ENCODE measurements at regions of chr7 and their contacts with region 1.

Region 1: DNA sequence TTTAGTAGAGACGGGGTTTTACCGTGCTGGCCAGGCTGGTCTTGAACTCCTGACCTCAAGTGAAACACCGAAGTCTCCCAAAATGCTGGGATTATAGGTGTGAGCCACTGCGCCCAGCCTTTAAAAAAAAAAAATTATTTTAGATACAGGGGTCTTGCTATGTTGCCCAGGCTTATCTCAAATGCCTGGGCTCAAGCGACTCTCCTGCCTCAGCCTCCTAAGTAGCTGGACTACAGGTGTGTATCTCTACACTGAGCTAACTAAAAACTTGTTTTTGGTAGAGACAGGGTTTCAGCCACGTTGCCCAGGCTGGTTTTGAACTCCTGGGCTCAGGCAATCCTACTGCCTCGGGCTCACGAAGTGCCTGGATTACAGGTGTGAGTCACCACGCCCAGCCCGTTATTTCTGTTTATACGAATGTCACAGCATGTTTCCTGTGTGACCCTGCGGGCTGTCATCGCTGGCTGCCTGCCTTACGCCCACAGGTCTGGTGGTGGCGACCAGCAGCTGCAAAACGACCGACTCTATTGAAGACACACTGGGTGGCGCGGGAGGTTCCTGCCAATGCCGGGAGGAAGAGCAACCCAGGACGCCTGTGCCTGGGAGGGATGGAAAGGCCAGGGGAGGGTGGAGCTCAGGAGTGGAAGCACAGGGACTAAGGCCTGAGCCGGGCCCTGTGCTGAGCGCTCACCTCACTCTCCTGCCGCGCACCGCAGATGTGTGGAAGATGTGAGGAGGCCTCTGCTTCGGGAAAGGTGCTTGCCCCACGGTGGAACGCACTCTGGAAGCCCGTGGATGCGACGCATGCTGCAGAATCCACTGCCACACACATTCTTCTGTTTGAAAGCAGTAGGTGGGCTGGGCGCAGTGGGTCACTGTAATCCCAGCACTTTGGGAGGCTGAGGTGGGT is 32.8 kb downstream of the AMZ1 start:
- DNase-seq: peak; percentile 82 to 91 (median 83)
- H3K4me3 ChIP-seq: no peak overlapping the region
- H3K4me3 Mint-ChIP-seq: peak overlapping the region in 1 of 2 donors; percentile 36
- H3K27ac ChIP-seq: no peak overlapping the region
- H3K27ac Mint-ChIP-seq: peak overlapping the region in 4 of 7 donors; percentile 47 to 79 (median 73)
- H3K4me1 ChIP-seq: peaks cover 30 to 39% of the 10 kb centered on the region in 2 donors
- H3K4me1 Mint-ChIP-seq: peaks cover 35% of the 10 kb centered on the region
- H3K27me3 ChIP-seq: peaks cover 0 to 22% of the 10 kb centered on the region in 2 donors
- H3K27me3 Mint-ChIP-seq: peaks cover 35 to 41% (median 36%) of the 10 kb centered on the region in 3 donors
- CTCF ChIP-seq: peak; percentile 52

Region 2: GRCh38 chr7:2660585-2661408 is 60.0 kb before region 1 on chr7:
- intact Hi-C with region 1: no loop called
- DNase-seq: no peak
- H3K4me3 ChIP-seq: no peak overlapping the region
- H3K4me3 Mint-ChIP-seq: no peak overlapping the region
- H3K27ac ChIP-seq: no peak overlapping the region
- H3K27ac Mint-ChIP-seq: no peak overlapping the region
- H3K4me1 ChIP-seq: peaks cover 0 to 5% of the 10 kb centered on the region in 2 donors
- H3K4me1 Mint-ChIP-seq: peaks cover 7% of the 10 kb centered on the region
- H3K27me3 ChIP-seq: no peaks in the 10 kb centered on the region
- H3K27me3 Mint-ChIP-seq: peaks cover 0 to 2% (median 2%) of the 10 kb centered on the region in 3 donors
- CTCF ChIP-seq: peak; percentile 54

Region 3: DNA sequence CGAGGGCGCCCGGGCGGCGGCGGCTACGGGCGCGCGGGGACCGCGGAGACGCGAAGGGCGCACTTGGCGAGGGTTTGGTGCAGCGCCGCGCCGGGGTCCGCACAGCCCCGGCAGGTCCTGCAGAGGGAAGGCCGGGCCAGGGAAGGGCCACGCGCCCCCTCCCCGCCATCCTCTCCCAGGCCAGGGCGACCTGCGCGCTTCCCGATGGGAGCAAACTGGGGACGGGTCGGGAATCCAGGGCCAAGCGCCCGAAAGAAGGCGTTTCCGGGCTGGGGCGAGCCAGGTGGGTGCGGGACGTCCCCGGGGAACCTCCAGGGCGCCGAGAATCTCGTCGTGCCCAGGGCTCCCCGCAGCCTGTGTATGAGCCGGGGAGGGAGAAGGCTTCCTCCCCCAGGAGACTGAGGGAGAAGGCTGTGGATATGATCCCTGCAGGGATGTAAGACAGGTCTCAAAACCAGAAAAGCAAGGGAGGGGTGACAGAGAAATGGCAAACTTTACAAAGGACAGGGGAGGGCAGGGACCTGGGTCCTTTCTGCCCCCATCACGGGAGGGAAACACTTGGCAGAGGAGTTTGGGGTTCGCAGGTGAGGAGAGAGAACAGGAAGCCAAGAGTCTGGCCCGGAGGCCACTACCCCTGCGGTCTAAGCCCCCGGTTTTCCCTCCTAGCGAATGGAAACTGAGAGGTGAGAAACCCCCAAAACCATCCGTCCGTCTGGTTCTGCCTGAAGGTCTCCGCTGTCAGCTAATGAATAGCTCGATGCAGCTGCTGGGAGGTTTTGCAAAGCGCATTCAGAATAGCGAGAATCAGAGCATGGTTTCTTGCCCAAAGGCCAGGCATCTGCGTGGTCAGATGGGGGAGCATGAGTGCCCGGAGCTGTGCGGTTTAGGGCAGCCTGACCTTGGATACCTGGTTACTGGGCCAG is 32.2 kb before region 1 on chr7:
- intact Hi-C with region 1: no loop called
- DNase-seq: no peak
- H3K4me3 ChIP-seq: peak overlapping the region in 1 of 3 experiments; percentile 21
- H3K4me3 Mint-ChIP-seq: peak overlapping the region; percentile 53 to 85
- H3K27ac ChIP-seq: no peak overlapping the region
- H3K27ac Mint-ChIP-seq: peak overlapping the region in 4 of 7 donors; percentile 57 to 82 (median 73)
- H3K4me1 ChIP-seq: peaks cover 57 to 60% of the 10 kb centered on the region in 2 donors
- H3K4me1 Mint-ChIP-seq: peaks cover 36% of the 10 kb centered on the region
- H3K27me3 ChIP-seq: peaks cover 15 to 46% of the 10 kb centered on the region in 2 donors
- H3K27me3 Mint-ChIP-seq: peaks cover 45 to 66% (median 65%) of the 10 kb centered on the region in 3 donors
- CTCF ChIP-seq: no peak

Region 4: GRCh38 chr7:2821161-2821841 is 100.5 kb after region 1 on chr7:
- intact Hi-C with region 1: loop called in 1 of 2 experiments (anchors 5 kb)
- DNase-seq: peak; percentile 36 to 72 (median 49)
- H3K4me3 ChIP-seq: no peak overlapping the region
- H3K4me3 Mint-ChIP-seq: no peak overlapping the region
- H3K27ac ChIP-seq: peak overlapping the region; percentile 36 to 80
- H3K27ac Mint-ChIP-seq: peak overlapping the region in 6 of 7 donors; percentile 36 to 90 (median 81)
- H3K4me1 ChIP-seq: peaks cover 7% of the 10 kb centered on the region in 2 donors
- H3K4me1 Mint-ChIP-seq: peaks cover 31% of the 10 kb centered on the region
- H3K27me3 ChIP-seq: no peaks in the 10 kb centered on the region
- H3K27me3 Mint-ChIP-seq: peaks cover 0 to 3% (median 0%) of the 10 kb centered on the region in 3 donors
- CTCF ChIP-seq: no peak

Region 5: DNA sequence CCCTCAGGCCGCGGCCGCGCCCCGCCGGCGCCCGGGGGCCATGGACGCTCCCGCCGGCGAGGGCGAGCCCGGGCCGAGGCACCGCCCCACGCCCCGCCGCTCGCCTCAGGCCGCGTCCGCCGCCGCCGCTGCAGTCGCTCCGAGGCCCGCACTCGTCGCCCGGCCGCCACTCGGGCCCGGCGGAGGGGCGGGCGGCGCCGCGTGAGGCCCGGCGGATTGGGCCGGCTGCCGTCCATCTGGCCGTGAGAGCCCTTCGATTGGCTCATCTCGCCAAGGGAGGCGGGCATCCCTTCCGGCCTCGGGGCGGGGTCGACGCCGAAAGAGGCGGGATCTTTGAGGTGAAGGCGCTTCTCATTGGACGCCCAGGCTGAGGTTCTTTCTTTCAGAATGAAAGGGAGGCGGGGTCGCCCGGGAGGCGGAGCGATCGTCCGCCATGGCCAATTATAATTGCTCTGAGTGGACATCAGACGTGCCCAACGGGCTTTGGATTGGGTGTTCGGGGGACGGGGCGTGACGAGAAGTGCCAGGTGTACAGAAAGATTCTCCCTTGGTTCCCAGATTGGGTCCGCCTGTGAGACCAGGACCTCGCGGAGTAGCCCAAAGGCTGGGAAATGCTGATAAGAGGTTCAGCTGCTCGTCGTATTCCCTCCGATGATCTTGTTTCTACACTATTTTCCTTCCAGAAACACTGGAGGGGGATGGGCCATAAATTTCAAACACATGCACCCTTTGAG is 123.5 kb after region 1 on chr7 and contains the start of gene GNA12:
- intact Hi-C with region 1: loop called in 1 of 2 experiments (anchors 5 kb)
- DNase-seq: peak; percentile 97 to 98 (median 98)
- H3K4me3 ChIP-seq: peak within 1 kb of the TSS; percentile 39 to 74 (median 66)
- H3K4me3 Mint-ChIP-seq: peak within 1 kb of the TSS; percentile 83 to 91
- H3K27ac ChIP-seq: peak within 1 kb of the TSS in 1 of 2 donors; percentile 56
- H3K27ac Mint-ChIP-seq: peak within 1 kb of the TSS in 6 of 7 donors; percentile 74 to 86 (median 80)
- H3K4me1 ChIP-seq: peaks cover 14 to 21% of the 10 kb centered on the region in 2 donors
- H3K4me1 Mint-ChIP-seq: peaks cover 45% of the 10 kb centered on the region
- H3K27me3 ChIP-seq: no peaks in the 10 kb centered on the region
- H3K27me3 Mint-ChIP-seq: peaks cover 4 to 9% (median 6%) of the 10 kb centered on the region in 3 donors
- CTCF ChIP-seq: no peak
- polyA plus RNA-seq, gene GNA12: 3.4 to 25.9 (median 10.6) TPM